Vagina (tissue), 2 donors: ENCODE measurements at regions of chr3 and their contacts with region 1.

Region 1: GRCh38 chr3:109284071-109284470 is 32.2 kb downstream of the DPPA2 start:
- DNase-seq: no peak
- H3K4me3 ChIP-seq: no peak overlapping the region
- H3K27ac ChIP-seq: no peak overlapping the region
- H3K4me1 ChIP-seq: no peaks in the 10 kb centered on the region
- H3K27me3 ChIP-seq: no peaks in the 10 kb centered on the region
- CTCF ChIP-seq: no peak
- POLR2A ChIP-seq: no peak

Region 2: GRCh38 chr3:108342837-108343478 is 941.1 kb before region 1 on chr3:
- intact Hi-C with region 1: loop called (anchors 5 kb)
- DNase-seq: no peak
- H3K4me3 ChIP-seq: no peak overlapping the region
- H3K27ac ChIP-seq: no peak overlapping the region
- H3K4me1 ChIP-seq: no peaks in the 10 kb centered on the region
- H3K27me3 ChIP-seq: no peaks in the 10 kb centered on the region
- CTCF ChIP-seq: no peak
- POLR2A ChIP-seq: no peak